PC-3 (cell line): ENCODE measurements at regions of chr19 and their contacts with region 1.

Region 1: GRCh38 chr19:47790398-47790814 is 11.9 kb downstream of the SELENOW start:
- DNase-seq: peak; percentile 69
- ATAC-seq: peak; percentile 84
- H3K4me3 ChIP-seq: no peak overlapping the region
- H3K27ac ChIP-seq: no peak overlapping the region
- H3K4me1 ChIP-seq: peaks cover 6% of the 10 kb centered on the region; the same call in 1 of the 2 replicates
- H3K27me3 ChIP-seq: no peaks in the 10 kb centered on the region
- CTCF ChIP-seq: peak; percentile 85

Region 2: GRCh38 chr19:47745010-47745901 is 45.1 kb before region 1 on chr19 and contains the start of gene NOP53:
- CTCF ChIA-PET with region 1: no interaction called
- POLR2A ChIA-PET with region 1: no interaction called
- intact Hi-C with region 1: no loop called
- DNase-seq: peak; percentile 94
- ATAC-seq: peak; percentile 52
- H3K4me3 ChIP-seq: peak within 1 kb of the TSS; percentile 88
- H3K27ac ChIP-seq: peak within 1 kb of the TSS; percentile 75
- H3K4me1 ChIP-seq: peaks cover 23% of the 10 kb centered on the region
- H3K27me3 ChIP-seq: no peaks in the 10 kb centered on the region
- CTCF ChIP-seq: no peak
- total RNA-seq, gene NOP53: 61.5 and 83.9 TPM in 2 replicates

Region 3: DNA sequence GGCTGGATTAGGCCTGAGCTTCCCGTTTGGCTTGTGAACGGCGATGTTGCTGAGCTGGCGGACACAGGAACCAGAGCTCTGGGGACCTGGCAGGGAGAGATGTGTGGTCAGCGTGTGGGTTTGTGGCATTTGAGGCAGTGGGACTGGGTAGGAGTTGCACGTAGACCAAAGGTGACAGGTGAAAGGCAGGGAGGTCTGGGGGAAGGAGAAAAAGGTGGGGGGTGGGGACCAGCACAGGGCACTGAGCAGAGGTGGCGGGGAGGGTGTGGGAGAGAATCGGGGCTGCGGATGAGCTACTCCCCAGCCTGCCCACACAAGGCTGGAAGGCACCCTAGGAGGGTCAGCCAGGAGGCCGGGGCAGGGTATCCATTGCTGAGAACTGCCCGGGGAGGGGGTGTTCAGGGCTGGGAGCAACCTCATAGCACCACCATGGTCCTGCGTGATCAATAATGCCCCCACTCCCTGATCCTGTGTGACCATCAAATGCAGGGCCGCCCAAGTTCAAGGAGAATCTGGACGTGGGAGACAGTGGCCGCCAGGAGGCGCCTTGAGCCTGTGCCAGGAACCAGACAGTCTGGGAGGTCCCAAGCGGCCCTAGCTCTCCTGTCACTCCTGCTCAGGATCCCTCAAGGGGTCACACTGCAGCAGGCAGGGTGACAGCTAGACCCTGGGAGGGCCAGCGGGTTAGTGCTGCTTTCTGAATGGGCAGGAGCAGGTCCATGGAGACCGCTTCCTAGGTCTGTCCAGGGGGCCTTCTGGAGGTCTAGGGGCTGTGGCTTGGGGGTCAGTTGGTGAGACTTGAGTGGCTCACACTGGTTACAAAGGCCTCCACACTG is 24.7 kb before region 1 on chr19:
- CTCF ChIA-PET with region 1: interaction called, 4 read pairs
- POLR2A ChIA-PET with region 1: no interaction called
- intact Hi-C with region 1: loop called (anchors 1 kb)
- DNase-seq: peak; percentile 43
- ATAC-seq: peak; percentile 69
- H3K4me3 ChIP-seq: no peak overlapping the region
- H3K27ac ChIP-seq: no peak overlapping the region
- H3K4me1 ChIP-seq: no peaks in the 10 kb centered on the region
- H3K27me3 ChIP-seq: no peaks in the 10 kb centered on the region
- CTCF ChIP-seq: peak; percentile 75

Region 4: DNA sequence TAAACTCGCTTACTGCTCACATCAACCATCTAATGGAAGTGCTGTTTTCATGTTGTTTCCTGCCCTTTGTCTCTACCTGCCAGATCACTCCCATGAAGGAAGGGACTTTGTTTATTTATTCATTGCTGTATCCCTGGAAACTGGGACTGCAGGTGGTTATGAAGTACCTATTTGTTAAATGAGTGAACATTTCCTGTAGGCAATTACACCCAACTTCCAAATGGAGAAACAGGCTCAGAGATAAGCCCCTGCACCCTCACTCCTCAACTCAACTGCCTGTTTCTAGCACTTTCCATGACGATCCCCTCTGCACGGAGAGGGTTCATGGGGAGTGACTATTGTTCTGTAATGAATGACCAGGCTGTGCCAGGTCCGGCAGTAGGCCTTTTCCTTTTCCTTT is 13.8 kb before region 1 on chr19:
- CTCF ChIA-PET with region 1: no interaction called
- POLR2A ChIA-PET with region 1: no interaction called
- intact Hi-C with region 1: no loop called
- DNase-seq: peak; percentile 60
- ATAC-seq: peak; percentile 21
- H3K4me3 ChIP-seq: no peak overlapping the region
- H3K27ac ChIP-seq: peak overlapping the region; percentile 11; the same call in 1 of the 2 replicates
- H3K4me1 ChIP-seq: peaks cover 8% of the 10 kb centered on the region
- H3K27me3 ChIP-seq: no peaks in the 10 kb centered on the region
- CTCF ChIP-seq: no peak

Region 5: DNA sequence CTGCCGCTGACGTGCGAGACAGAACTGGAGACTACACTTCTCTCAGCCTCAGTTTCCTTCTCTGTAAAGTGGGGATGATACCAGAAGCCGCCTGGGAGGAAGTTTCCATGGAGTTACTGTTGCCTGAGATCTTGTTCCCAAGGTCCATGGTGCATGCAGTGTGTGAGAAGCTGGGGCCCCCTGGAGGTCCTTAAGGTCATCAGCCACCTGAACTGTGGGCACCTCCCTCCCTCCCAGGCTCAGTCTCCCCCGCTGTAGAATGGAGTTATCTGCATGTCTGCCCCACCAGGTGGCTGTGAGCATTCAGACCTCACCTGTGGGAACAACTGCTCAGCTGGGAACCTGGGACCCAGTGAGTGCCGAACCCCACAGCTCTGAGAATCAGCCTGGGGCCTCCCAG is 34.0 kb after region 1 on chr19:
- CTCF ChIA-PET with region 1: no interaction called
- POLR2A ChIA-PET with region 1: no interaction called
- intact Hi-C with region 1: no loop called
- DNase-seq: no peak
- ATAC-seq: no peak
- H3K4me3 ChIP-seq: no peak overlapping the region
- H3K27ac ChIP-seq: no peak overlapping the region
- H3K4me1 ChIP-seq: no peaks in the 10 kb centered on the region
- H3K27me3 ChIP-seq: peaks cover 7% of the 10 kb centered on the region; the same call in 1 of the 2 replicates
- CTCF ChIP-seq: no peak